Activated CD4-positive, alpha-beta memory T cell treated with anti-CD3 and anti-CD28 coated beads, Interleukin-2, amount 10 ng/mL, durations not matched to agents 7 days and 5 days (primary cell): ENCODE measurements at regions of chr17 and their contacts with region 1.

Region 1: GRCh38 chr17:30808785-30809286 is 15.7 kb downstream of the CRLF3 start:
- DNase-seq: peak; percentile 55
- H3K4me3 Mint-ChIP-seq: peak overlapping the region; percentile 82
- H3K27ac Mint-ChIP-seq: peak overlapping the region; percentile 100
- H3K4me1 Mint-ChIP-seq: peaks cover 65% of the 10 kb centered on the region
- H3K27me3 Mint-ChIP-seq: no peaks in the 10 kb centered on the region

Region 2: DNA sequence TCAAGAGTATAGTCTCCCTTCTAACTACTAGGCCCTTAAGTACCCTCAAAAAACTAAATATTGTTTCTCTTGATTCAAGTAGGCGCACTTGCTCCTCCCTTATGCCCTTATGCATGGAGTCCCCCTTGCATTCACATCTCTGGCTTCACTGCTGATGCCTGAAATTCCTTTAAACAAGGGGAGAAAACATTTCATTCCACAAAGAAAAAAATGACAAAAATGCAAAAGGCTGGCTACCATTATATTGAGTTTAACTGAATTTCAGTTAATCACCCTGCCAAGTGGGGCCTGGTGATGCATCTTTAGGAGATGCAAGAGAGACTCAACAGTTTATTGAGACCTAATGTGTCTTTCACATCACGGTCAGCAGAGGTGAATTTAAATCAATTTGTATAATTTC is 19.9 kb before region 1 on chr17:
- CTCF ChIA-PET with region 1: interaction called, 3 read pairs
- POLR2A ChIA-PET with region 1: interaction called, 20 read pairs
- DNase-seq: no peak
- H3K4me3 Mint-ChIP-seq: no peak overlapping the region
- H3K27ac Mint-ChIP-seq: peak overlapping the region; percentile 5
- H3K4me1 Mint-ChIP-seq: peaks cover 15% of the 10 kb centered on the region
- H3K27me3 Mint-ChIP-seq: no peaks in the 10 kb centered on the region

Region 3: DNA sequence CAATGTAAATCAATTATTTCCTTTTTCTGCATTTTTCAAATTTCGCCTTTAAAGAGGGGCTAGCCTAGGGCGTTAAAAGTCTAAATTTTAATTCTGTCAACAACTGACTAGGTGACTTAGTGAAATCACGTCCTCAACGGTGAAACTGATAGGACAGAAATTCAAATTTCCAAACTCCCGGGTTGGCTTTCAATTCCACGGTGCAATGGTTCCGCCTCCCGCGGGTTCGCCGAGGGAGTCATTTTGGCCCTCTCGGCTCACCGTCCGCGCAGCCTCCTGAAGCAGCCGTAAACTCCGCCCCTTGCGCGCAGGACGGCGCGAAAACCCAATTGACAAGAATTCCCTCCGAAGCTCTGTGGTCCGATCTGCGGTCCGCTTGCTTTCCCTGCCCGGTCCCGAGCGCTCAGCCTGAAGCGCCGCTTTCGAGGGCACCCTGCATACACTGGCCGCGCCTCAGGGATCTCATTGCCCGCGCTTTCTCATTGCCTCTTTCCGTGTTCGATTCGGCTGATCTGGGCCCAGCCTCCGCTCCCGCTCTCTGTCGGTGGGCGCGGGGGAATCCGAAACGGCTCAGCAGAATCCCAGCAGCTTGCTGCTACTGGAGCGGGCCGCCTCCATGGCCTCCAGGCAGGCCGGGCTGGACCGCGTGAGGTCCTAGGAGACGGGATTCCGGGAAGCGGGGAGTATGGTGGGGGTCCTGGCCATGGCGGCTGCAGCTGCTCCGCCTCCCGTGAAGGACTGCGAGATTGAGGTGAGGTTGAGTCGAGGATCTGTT is 23.0 kb after region 1 on chr17 and contains the start of gene ATAD5:
- CTCF ChIA-PET with region 1: interaction called, 185 read pairs
- POLR2A ChIA-PET with region 1: interaction called, 256 read pairs
- DNase-seq: peak; percentile 91
- H3K4me3 Mint-ChIP-seq: peak within 1 kb of the TSS; percentile 98
- H3K27ac Mint-ChIP-seq: peak within 1 kb of the TSS; percentile 91
- H3K4me1 Mint-ChIP-seq: peaks cover 49% of the 10 kb centered on the region
- H3K27me3 Mint-ChIP-seq: no peaks in the 10 kb centered on the region
- total RNA-seq, gene ATAD5: 24.0 to 26.7 TPM